Psoas muscle (tissue), 8 donors: ENCODE measurements at regions of chr2 and their contacts with region 1.

Region 1: GRCh38 chr2:96951093-96951654 is 35.2 kb downstream of the FAM178B start:
- DNase-seq: peak; percentile 70 to 84
- ATAC-seq: peak; percentile 83 to 98 (median 95)
- H3K4me3 ChIP-seq: no peak overlapping the region
- H3K27ac ChIP-seq: no peak overlapping the region
- H3K4me1 ChIP-seq: peaks cover 5% of the 10 kb centered on the region
- H3K27me3 ChIP-seq: no peaks in the 10 kb centered on the region
- CTCF ChIP-seq: peak; percentile 92

Region 2: GRCh38 chr2:96806468-96807126 is 144.6 kb before region 1 on chr2:
- intact Hi-C with region 1: loop called in 1 of 2 experiments (anchors 1 kb)
- DNase-seq: no peak
- ATAC-seq: no peak
- H3K4me3 ChIP-seq: no peak overlapping the region
- H3K27ac ChIP-seq: no peak overlapping the region
- H3K4me1 ChIP-seq: peaks cover 9% of the 10 kb centered on the region
- H3K27me3 ChIP-seq: no peaks in the 10 kb centered on the region
- CTCF ChIP-seq: no peak

Region 3: DNA sequence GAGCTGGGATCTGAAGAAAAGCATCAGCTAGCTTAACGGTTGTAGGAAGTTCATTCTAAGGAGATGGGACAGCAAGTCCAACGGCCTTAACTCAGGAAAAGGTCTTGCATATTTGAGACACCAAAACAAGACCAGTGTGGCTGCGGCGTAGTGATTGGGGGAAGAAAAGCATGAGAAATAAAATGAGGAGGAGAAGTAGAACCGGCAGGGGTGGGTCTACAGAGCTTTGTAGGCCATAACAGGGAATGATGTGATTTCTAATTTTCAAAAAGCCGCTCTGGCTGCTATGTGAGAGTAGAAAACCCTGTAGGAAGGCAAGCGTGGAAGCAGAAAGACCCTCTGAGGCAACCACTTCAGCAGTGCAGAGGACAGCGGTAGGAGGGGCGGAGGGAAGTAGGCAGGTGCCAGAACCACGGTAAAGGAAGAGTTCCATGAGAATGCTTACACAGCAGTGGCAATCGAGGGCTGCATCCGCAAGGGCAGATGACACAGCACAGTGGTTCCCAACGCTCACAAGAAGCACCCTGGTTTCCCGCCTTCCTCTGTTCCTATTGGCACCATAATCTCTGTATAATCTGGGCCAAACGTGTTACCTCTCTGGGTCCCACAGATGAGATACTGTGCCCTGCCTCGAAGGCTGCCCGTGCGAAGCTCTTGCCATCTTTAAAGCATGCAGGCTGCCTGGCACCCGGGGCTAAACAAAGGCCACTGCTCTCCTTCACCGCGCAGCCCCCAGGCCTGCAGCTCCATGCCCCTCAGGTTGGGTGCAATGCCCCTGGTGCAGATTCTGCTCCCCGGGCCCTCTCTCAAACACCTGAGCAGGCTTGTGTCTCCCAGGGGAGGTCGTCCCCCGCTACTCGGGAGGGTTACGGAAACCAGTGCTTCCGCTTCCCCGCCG is 94.1 kb before region 1 on chr2:
- intact Hi-C with region 1: loop called (anchors 1 to 2 kb)
- DNase-seq: peak in 1 of 2 donors; percentile 43
- ATAC-seq: peak in 2 of 4 donors; percentile 4 to 20
- H3K4me3 ChIP-seq: peak overlapping the region; percentile 88
- H3K27ac ChIP-seq: peak overlapping the region; percentile 84
- H3K4me1 ChIP-seq: peaks cover 17% of the 10 kb centered on the region
- H3K27me3 ChIP-seq: no peaks in the 10 kb centered on the region
- CTCF ChIP-seq: no peak